ENCODE measurements at regions of chr13 and their contacts with region 1.

Region 1: DNA sequence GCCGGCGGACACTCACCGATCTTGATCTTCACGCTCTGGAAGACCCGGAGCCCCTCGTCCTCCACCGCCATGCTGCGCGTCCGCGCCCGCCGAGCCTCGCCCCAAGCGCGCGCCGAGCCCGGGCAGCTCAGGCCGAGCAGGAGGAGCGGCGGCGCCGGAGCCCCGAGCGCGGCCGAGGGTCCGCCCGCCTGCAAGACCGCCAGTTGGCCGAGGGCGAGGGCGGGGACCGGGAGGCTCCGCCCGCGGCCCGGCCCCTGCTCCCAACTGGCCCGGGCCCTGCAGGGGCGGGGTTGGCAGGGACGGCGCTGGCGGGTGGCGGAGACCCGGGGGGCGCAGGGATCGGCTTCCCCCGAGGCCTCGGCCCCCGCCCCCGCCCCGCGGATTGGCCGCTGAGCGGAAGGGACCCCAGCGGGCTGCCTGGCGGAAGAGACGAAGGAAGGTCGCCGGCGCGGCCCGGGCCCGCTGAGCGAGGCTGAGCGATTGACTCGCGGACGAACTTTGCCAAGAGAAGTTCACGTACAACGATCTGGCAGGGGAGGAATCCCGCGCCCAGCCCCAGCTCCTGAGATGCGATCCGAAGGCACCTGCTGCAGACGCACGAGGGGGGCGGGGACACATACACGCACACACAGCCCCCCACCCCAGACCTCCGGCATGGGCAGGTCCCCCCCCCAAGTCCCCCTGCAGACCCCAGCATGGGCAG is at the start of gene RASA3:
- DNase-seq: peak; percentile 37 to 85 (median 60)
- ATAC-seq: peak; percentile 31
- H3K4me3 ChIP-seq: peak within 1 kb of the TSS; percentile 100
- H3K4me3 Mint-ChIP-seq: peak within 1 kb of the TSS; percentile 99
- H3K27ac ChIP-seq: peak within 1 kb of the TSS; percentile 80 to 85
- H3K27ac Mint-ChIP-seq: peak within 1 kb of the TSS; percentile 99
- H3K4me1 ChIP-seq: peaks cover 50% of the 10 kb centered on the region
- H3K4me1 Mint-ChIP-seq: peaks cover 60% of the 10 kb centered on the region
- H3K27me3 ChIP-seq: no peaks in the 10 kb centered on the region
- H3K27me3 Mint-ChIP-seq: no peaks in the 10 kb centered on the region
- CTCF ChIP-seq: no peak
- total RNA-seq, gene RASA3: 181 to 184 TPM

Region 2: DNA sequence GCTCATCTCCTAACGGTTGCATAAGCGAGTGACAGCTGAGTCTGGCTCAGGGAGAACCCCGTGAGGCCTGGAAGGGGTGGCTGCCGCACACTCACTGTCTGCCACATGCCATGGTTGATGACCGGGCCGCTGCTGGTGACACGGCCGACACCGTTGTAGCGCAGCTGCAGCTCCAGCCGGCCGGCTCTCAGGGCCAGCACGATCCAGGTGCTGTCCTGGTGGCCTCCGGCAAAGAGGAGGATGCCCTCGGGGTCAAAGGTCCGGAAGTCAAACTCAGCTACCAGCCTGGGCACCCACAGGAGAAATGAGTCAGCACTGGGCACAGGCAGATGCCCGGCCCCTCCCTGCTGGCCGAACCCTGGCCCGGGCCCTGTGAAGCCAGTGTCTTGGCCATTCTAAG is 300.4 kb before region 1 on chr13:
- CTCF ChIA-PET with region 1: no interaction called
- POLR2A ChIA-PET with region 1: no interaction called
- intact Hi-C with region 1: no loop called
- DNase-seq: no peak
- ATAC-seq: no peak
- H3K4me3 ChIP-seq: no peak overlapping the region
- H3K4me3 Mint-ChIP-seq: no peak overlapping the region
- H3K27ac ChIP-seq: no peak overlapping the region
- H3K27ac Mint-ChIP-seq: no peak overlapping the region
- H3K4me1 ChIP-seq: no peaks in the 10 kb centered on the region
- H3K4me1 Mint-ChIP-seq: no peaks in the 10 kb centered on the region
- H3K27me3 ChIP-seq: no peaks in the 10 kb centered on the region
- H3K27me3 Mint-ChIP-seq: no peaks in the 10 kb centered on the region
- CTCF ChIP-seq: no peak

Region 3: DNA sequence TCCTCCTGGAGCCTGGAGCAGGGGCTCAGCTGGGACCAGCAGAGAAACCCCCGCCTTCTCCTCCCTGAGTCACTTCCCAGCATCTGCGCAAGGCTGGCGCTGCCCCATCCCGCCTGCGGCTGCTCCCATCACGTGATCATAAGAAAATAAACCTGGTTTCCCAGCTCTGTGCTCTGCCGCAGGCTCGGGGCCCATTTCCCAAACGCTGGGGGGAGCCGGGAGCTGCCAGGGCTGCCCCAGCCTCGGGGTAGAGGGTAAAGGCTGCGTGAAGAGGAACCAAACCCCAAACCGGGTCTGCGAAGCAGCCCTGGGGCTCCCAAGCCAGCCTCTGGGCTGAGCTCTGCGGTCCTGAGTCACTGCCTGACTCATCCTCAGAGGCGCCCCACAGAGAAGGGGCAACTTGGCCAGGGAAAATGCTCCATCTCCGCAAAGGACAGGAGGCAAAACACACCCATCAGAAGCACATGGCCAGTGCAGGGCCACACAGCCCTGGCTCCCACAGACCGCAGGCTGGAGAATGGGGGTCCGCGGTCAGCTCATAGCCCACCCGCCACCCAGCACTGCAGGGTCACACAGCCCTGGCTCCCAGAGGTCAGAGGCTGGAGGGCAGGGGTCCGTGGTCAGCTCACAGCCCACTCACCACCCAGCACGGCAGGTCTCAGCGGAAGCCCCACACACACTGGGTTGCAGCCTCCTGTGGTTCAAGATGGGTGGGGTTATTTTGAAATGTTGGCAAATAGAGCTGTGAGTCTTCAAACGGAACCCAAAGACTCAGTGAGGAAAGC is 67.2 kb before region 1 on chr13:
- CTCF ChIA-PET with region 1: interaction called, 3 read pairs
- POLR2A ChIA-PET with region 1: interaction called, 9 read pairs
- intact Hi-C with region 1: loop called in 1 of 2 experiments (anchors 5 kb)
- DNase-seq: peak; percentile 44 to 87 (median 68)
- ATAC-seq: peak; percentile 67
- H3K4me3 ChIP-seq: peak overlapping the region; percentile 51
- H3K4me3 Mint-ChIP-seq: peak overlapping the region; percentile 87
- H3K27ac ChIP-seq: peak overlapping the region; percentile 70 to 77
- H3K27ac Mint-ChIP-seq: peak overlapping the region; percentile 95
- H3K4me1 ChIP-seq: peaks cover 71% of the 10 kb centered on the region
- H3K4me1 Mint-ChIP-seq: peaks cover 63% of the 10 kb centered on the region
- H3K27me3 ChIP-seq: no peaks in the 10 kb centered on the region
- H3K27me3 Mint-ChIP-seq: no peaks in the 10 kb centered on the region
- CTCF ChIP-seq: no peak

Region 4: DNA sequence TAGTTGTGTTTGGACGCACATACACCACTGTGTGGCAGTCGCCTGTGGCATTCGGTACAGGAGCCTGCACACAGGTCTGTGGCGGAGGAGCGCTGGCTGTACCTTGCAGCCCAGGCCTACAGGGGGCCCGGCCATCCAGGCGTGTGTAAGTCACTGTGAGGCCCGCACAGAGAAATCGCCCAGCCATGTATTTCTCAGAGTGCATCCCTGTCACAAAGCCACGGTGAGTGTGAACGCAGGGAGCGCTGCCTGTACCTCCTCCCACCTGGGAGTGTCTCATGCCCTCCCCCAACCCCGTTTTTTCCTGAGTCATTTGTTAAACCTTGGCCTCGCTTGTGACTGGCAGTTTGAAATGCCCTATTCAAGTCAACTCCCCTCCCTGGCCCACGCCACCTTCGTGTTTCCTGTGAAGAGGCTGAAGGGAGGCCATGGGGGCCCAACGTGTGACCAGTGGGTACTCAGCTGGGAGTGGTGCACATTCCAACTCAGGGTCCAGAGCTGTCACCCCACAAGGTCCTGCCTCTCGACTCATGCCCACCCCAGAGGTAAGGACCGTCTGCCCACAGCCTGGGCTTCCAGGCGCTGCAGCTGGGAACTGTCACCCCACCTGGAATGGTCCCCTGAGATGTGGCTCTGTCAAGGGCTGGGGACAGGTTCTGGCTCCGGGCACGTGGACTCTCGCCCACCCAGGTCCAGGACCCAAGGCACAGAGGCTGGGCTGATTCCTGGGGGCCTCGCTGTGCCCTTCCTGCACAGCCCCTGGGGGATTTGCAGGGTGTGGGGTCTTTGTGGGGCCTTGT is 11.4 kb after region 1 on chr13:
- CTCF ChIA-PET with region 1: interaction called, 5 read pairs
- POLR2A ChIA-PET with region 1: interaction called, 138 read pairs
- intact Hi-C with region 1: loop called in 1 of 2 experiments (anchors 1 kb)
- DNase-seq: peak in 11 of 14 experiments; percentile 28 to 77 (median 52)
- ATAC-seq: no peak
- H3K4me3 ChIP-seq: no peak overlapping the region
- H3K4me3 Mint-ChIP-seq: peak overlapping the region; percentile 21
- H3K27ac ChIP-seq: peak overlapping the region; percentile 78 to 82
- H3K27ac Mint-ChIP-seq: no peak overlapping the region
- H3K4me1 ChIP-seq: peaks cover 97% of the 10 kb centered on the region
- H3K4me1 Mint-ChIP-seq: peaks cover 40% of the 10 kb centered on the region
- H3K27me3 ChIP-seq: no peaks in the 10 kb centered on the region
- H3K27me3 Mint-ChIP-seq: no peaks in the 10 kb centered on the region
- CTCF ChIP-seq: peak; percentile 56

Region 5: DNA sequence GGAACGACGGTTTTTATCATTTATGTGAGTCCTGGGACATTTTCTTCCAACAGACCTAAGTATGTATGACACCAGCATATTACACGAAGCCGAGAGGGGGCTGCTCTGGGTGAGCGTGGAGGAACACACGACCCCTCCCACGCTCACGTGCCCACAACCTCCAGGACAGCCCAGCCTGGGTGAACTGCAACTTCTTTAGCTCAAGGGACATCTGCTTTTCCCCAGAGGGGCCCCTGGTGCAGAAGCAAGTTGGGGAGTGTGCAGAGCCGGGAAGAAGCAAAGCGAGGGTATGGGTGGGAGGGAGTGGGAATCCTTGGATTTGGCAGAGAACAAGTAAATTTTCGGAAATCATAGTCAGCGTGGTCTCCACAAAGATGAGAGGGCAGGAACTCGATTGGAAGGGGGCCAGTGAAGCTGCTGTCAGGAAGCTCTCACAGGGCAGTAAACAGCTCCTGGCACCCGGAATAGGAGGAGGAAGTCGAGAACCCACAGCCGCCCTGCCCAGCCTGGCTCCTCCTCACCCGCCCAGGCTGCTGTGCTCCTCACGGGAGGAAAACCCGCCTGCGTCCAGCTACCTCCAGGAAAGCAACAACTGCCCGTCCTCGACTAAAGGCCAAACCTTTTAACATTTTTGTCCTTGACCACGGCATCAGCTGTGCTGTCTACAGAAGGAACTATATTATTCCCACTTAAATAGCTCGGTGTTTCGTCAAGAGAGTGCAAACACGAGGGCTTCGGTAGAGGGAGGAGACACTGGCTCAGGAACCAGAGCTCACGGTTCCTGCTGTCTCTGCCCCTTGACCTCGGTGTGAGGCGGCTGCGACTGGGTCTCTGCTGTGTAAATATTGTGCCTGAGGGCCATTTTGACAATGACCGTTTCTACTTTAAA is 29.3 kb after region 1 on chr13:
- CTCF ChIA-PET with region 1: interaction called, 3 read pairs
- POLR2A ChIA-PET with region 1: interaction called, 19 read pairs
- intact Hi-C with region 1: loop called in 1 of 2 experiments (anchors 5 kb)
- DNase-seq: peak in 13 of 14 experiments; percentile 30 to 73 (median 49)
- ATAC-seq: peak; percentile 78
- H3K4me3 ChIP-seq: peak overlapping the region; percentile 43
- H3K4me3 Mint-ChIP-seq: peak overlapping the region; percentile 82
- H3K27ac ChIP-seq: peak overlapping the region; percentile 42 to 70
- H3K27ac Mint-ChIP-seq: peak overlapping the region; percentile 93
- H3K4me1 ChIP-seq: peaks cover 80% of the 10 kb centered on the region
- H3K4me1 Mint-ChIP-seq: peaks cover 92% of the 10 kb centered on the region
- H3K27me3 ChIP-seq: no peaks in the 10 kb centered on the region
- H3K27me3 Mint-ChIP-seq: no peaks in the 10 kb centered on the region
- CTCF ChIP-seq: no peak

Measured in CD4-positive, alpha-beta T cell (primary cell).